PC-9 (cell line): ENCODE measurements at regions of chr10 and their contacts with region 1.

Region 1: GRCh38 chr10:80408242-80409101 is at the start of gene PRXL2A:
- DNase-seq: peak; percentile 69 to 91
- H3K4me3 ChIP-seq: peak within 1 kb of the TSS; percentile 87
- H3K27ac ChIP-seq: peak within 1 kb of the TSS; percentile 67
- H3K4me1 ChIP-seq: peaks cover 24% of the 10 kb centered on the region
- H3K27me3 ChIP-seq: no peaks in the 10 kb centered on the region
- CTCF ChIP-seq: no peak
- total RNA-seq, gene PRXL2A: 88.7 and 105 TPM in 2 replicates

Region 2: GRCh38 chr10:80429521-80429966 is 21.1 kb after region 1 on chr10:
- CTCF ChIA-PET with region 1: no interaction called
- POLR2A ChIA-PET with region 1: interaction called, 4 read pairs
- intact Hi-C with region 1: loop called (anchors 2 kb)
- DNase-seq: peak; percentile 92 to 96
- H3K4me3 ChIP-seq: no peak overlapping the region
- H3K27ac ChIP-seq: peak overlapping the region; percentile 30
- H3K4me1 ChIP-seq: peaks cover 27% of the 10 kb centered on the region
- H3K27me3 ChIP-seq: no peaks in the 10 kb centered on the region
- CTCF ChIP-seq: no peak

Region 3: GRCh38 chr10:80453701-80454513 is 45.4 kb after region 1 on chr10 and contains the start of gene TSPAN14:
- CTCF ChIA-PET with region 1: interaction called, 6 read pairs
- POLR2A ChIA-PET with region 1: interaction called, 43 read pairs
- intact Hi-C with region 1: no loop called
- DNase-seq: peak; percentile 64 to 89
- H3K4me3 ChIP-seq: peak within 1 kb of the TSS; percentile 94
- H3K27ac ChIP-seq: peak within 1 kb of the TSS; percentile 75
- H3K4me1 ChIP-seq: peaks cover 49% of the 10 kb centered on the region
- H3K27me3 ChIP-seq: no peaks in the 10 kb centered on the region
- CTCF ChIP-seq: no peak
- total RNA-seq, gene TSPAN14: 114 and 135 TPM in 2 replicates

Region 4: GRCh38 chr10:80459047-80459931 is 50.8 kb after region 1 on chr10:
- CTCF ChIA-PET with region 1: interaction called, 6 read pairs
- POLR2A ChIA-PET with region 1: interaction called, 43 read pairs
- intact Hi-C with region 1: no loop called
- DNase-seq: peak; percentile 86 to 93
- H3K4me3 ChIP-seq: peak overlapping the region; percentile 51
- H3K27ac ChIP-seq: peak overlapping the region; percentile 82
- H3K4me1 ChIP-seq: peaks cover 85% of the 10 kb centered on the region
- H3K27me3 ChIP-seq: no peaks in the 10 kb centered on the region
- CTCF ChIP-seq: no peak; the same call in 1 of the 2 replicates

Region 5: GRCh38 chr10:80498833-80499741 is 90.6 kb after region 1 on chr10:
- CTCF ChIA-PET with region 1: no interaction called
- POLR2A ChIA-PET with region 1: interaction called, 8 read pairs
- intact Hi-C with region 1: loop called (anchors 1 kb)
- DNase-seq: peak; percentile 94 to 99
- H3K4me3 ChIP-seq: peak overlapping the region; percentile 21; the same call in 1 of the 2 replicates
- H3K27ac ChIP-seq: peak overlapping the region; percentile 99
- H3K4me1 ChIP-seq: peaks cover 98% of the 10 kb centered on the region
- H3K27me3 ChIP-seq: no peaks in the 10 kb centered on the region
- CTCF ChIP-seq: no peak

Region 6: DNA sequence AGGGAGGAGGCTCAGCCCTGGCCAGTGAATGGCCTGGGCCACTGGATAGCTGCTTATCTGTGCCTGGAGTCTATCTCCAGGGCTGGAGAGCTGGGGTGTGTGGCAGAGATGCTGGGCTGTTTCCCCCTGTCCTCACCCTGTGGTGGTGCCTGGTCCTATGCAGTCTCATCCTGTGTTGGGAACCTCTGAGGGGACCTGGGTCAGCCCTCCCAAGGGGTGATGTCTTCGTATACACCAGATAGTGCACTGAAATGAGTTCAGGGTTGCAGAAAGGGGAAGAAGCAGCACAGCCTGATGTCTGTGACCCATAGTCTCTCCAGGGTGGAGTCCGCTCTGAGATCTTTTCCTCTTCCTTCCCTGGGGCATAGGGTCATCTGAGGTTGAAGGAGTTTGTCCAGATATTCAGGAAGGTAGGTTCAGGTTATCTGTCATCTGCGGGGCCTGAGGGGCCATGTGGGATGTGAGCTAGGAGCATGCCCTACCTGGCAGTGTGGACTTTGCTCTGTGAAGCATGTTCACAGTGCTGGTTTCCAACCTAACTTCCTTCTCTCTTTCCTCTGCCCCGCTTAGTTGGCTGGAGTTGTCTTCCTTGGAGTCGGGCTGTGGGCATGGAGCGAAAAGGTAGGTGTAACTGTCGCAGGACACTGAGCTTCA is 95.8 kb after region 1 on chr10:
- CTCF ChIA-PET with region 1: interaction called, 5 read pairs
- POLR2A ChIA-PET with region 1: interaction called, 11 read pairs
- intact Hi-C with region 1: loop called (anchors 1 kb)
- DNase-seq: peak; percentile 41 to 65
- H3K4me3 ChIP-seq: peak overlapping the region; percentile 8; the same call in 1 of the 2 replicates
- H3K27ac ChIP-seq: peak overlapping the region; percentile 99
- H3K4me1 ChIP-seq: peaks cover 100% of the 10 kb centered on the region
- H3K27me3 ChIP-seq: no peaks in the 10 kb centered on the region
- CTCF ChIP-seq: no peak

Region 7: GRCh38 chr10:80589726-80590373 is 181.4 kb after region 1 on chr10:
- CTCF ChIA-PET with region 1: no interaction called
- POLR2A ChIA-PET with region 1: interaction called, 45 read pairs
- intact Hi-C with region 1: no loop called
- DNase-seq: no peak
- H3K4me3 ChIP-seq: no peak overlapping the region
- H3K27ac ChIP-seq: no peak overlapping the region
- H3K4me1 ChIP-seq: no peaks in the 10 kb centered on the region
- H3K27me3 ChIP-seq: peaks cover 9% of the 10 kb centered on the region; the same call in 1 of the 2 replicates
- CTCF ChIP-seq: no peak

Region 8: DNA sequence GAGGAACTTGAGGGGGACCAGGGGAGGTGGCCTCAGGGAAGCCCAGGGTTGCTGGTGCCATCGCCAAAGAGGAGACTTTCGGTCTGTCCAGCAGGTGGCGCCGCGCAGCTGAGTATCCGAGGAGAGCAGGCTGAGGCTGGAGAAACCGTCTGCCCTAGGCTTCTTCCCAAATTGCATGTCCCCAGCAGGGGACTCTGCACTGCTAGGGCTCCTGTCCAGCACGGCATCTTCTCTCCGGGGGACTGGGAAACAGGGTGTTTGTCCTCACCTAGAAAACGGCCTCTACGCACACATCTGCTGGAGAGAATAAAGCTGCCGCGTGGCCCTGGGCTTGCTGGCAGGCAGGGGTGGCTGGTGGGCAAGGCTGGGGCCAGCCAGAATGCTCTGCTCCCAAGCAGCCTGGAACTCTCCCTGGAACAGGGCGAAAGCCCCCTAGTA is 291.1 kb after region 1 on chr10:
- CTCF ChIA-PET with region 1: no interaction called
- POLR2A ChIA-PET with region 1: no interaction called
- intact Hi-C with region 1: no loop called
- DNase-seq: peak; percentile 49 to 69
- H3K4me3 ChIP-seq: no peak overlapping the region
- H3K27ac ChIP-seq: no peak overlapping the region
- H3K4me1 ChIP-seq: no peaks in the 10 kb centered on the region
- H3K27me3 ChIP-seq: peaks cover 82% of the 10 kb centered on the region
- CTCF ChIP-seq: peak; percentile 90